GM18951 (cell line): ENCODE measurements at regions of chr6 and their contacts with region 1.

Region 1: GRCh38 chr6:158972241-158973233 is 27.5 kb downstream of the RSPH3 start:
- POLR2A ChIP-seq: no peak

Region 2: GRCh38 chr6:158704181-158704822 is 268.2 kb before region 1 on chr6:
- in situ Hi-C with region 1: loop called (anchors 10 kb)
- POLR2A ChIP-seq: no peak